Sciatic nerve (tissue), 2 donors: ENCODE measurements at regions of chr3 and their contacts with region 1.

Region 1: DNA sequence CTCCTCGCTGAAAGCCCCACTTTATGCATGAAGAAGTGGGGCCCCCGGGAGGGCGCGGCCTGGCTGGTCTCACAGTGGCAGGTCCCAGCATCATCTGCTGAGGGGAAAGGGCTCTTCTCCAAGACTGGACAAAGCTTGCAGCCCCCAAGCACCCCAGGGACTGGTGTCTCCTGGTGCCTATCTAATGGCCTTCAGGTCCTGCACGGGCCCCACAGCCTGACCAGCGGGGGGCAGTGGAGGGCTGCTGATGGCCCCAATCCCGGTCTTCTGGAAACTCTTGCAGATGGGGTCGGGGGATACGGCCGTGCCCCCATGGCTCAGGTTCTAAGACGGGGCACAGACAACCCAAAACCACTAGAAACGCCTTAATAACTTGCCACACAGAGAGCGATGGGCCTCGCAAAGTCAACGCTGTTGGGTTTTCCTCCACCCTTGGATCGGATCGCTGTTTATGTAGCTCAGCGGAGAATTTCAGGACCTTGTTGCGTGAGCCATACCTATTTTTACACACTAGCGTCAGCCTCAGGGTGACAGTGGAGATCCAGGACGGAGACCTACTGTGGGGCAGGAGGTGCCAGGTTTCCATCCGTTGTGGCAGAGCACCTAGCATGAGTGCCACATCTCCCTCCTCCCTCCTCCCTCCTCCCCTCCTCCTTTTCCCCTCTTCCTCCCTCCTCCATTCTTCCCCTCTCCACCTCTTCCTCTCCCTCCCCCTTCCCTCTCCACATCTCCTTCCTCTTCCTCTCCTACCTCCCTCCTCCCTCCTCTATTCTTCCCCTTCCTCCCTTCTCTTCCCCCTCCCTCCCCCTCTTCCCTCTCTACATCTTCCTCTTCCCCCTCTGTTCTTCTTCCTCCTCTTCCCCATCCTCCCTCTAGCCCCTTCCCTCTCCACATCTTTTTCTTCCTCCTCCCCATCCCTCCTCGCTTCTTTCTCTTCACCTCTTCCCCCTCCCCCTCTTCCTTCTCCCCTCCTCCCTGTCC is 79.3 kb upstream of the ALDH1L1 start:
- DNase-seq: peak; percentile 72
- ATAC-seq: peak; percentile 70

Region 2: DNA sequence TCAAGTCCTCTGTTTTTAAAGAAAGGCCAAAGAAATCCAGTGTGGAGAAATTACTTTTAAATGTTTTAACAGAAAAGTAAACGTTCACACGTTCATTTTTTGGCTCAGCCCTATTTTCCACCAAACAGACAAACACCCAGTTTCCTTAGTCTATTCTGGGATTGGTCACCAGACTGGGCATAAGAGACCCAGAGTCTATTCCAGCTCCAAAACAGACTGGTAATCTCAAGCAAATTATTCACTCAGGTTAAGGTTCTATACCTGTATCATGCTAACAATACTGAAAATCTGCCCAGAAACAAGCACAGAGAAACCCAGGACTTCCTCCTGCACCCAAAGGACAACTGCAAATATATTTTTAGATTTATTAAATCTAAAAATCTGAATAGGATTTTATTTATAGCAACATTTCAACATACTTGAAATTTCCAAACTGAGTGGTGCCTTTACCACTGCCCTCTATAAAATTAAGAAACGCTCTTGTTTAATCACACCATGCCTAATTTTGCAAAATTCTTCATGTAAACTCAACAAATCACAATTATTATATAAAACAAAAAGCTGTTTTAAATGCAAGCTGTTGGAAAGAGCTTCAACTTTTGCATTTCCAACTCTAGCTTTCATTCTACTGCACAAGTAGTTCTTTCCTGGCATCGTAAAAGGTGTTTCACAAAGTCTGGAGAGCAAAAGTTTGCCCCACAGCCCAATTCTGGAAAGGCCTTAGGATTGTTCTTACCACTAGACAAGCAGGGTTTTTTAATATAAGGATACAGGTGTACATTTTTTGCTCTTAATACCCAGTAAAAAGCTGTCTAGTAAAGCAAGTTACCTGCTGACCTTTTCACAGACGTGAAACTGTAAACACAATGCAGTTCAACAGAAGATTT is 903.3 kb before region 1 on chr3:
- intact Hi-C with region 1: no loop called
- DNase-seq: no peak
- ATAC-seq: no peak

Region 3: DNA sequence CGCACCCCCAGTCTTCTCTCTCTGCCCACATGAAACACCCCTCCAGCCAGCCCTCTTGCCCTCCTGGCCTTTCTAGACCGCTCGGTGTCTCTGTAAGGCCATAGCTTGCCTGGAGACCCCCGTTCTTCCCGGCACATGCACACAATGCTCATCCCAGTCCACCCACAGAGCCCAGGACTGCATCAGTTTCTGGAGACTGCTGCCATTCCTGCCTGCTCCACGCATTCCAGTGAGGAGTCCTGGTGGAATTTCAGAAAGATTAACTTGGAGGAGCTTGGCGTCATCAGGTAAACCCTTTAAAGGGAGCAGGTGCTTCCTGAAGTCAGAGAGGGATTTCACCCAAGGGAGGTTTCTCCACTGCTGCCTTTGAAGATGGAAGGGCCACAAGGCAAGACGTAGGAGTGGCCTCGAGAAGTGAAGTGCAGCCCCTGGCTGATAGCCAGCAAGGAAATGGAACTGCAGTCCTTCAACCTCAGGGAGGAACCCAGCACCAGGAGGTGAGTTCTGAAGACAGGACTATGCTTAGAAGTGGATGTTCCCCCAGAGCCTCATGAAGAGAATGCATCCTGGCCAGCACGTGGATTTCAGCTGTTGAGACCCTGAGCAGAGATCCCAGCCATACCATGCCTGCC is 195.0 kb before region 1 on chr3:
- intact Hi-C with region 1: no loop called
- DNase-seq: no peak
- ATAC-seq: no peak

Region 4: DNA sequence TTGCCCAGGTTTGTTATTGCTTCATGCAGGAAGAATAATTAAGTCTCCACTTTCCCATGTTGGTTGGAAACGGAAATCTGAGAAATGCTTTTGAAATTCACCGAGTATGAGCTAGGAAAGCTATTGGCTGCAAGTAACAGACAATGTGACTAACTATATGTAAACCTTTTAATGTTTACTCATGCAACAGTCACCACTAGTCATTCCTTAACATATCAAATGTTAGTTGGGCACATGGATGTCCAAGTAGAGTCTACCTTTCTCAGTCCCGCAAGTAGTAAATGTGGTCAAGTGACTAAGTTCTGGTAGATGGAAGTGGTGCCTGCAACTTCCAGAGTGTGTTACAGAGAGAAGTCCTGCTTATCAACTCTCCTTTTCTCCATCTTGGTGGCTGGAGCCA is 45.0 kb after region 1 on chr3:
- intact Hi-C with region 1: no loop called
- DNase-seq: no peak
- ATAC-seq: no peak

Region 5: GRCh38 chr3:126321490-126321889 is 61.8 kb after region 1 on chr3:
- intact Hi-C with region 1: loop called (anchors 2 kb)
- DNase-seq: no peak
- ATAC-seq: no peak

Region 6: DNA sequence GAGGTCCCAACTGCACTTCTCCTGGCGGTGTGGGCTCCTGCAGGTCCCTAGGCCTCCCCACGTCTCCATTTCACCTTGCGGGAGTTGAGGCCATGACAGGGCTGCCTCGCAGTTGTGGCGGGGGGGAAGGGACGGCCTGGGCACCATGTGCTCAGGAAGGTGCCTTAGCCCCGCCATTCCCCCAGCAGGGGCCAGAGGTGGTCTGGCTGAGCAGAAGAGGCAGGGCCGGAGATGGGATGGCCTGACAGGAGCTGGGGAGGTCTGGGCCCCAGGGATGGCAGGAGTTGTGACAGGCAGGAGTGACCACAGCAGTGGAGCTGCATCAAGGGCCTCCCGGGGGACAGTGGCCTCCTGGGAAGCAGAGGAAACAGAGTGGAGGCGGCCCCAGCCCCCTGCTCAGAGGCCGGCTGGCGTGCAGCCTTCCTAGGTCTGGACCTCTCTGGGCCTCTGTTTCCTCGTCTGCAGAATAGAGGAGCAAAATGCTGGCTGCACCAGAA is 116.2 kb after region 1 on chr3:
- intact Hi-C with region 1: loop called (anchors 5 kb)
- DNase-seq: peak; percentile 46
- ATAC-seq: no peak

Region 7: DNA sequence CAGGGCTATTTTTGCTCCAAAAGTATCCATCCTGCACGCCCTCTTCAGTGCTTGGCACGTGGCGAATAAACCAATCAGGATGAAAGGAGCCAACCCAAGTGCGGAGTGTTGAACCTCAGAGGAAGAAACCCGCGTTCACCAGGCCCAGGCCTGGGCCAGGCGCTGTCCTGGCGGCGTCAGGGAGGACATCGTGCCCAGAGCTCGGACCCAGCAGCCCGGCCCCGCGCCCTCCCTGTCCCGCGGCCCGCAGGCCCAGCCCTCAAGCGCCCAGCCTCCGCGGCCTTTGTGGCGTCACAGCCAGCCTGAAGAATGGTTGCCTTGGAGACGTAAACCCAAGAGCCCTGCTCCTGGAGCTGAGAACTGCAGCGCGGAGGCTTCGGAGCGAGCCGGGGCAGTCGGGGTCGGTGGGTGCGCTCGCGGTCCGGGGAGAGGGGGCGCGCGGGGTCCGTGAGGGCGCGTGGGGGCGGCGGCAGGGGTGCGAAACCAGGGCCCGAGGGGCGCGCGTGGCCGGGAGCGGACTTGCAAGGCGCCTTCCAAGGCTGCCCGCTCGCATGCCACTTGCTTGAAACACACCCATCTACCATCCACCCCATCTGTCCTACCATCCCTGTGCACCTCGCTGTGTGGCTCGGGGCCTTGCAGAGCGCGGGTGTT is 135.0 kb after region 1 on chr3 and contains the start of gene CFAP100:
- intact Hi-C with region 1: loop called (anchors 5 kb)
- DNase-seq: peak; percentile 73
- ATAC-seq: peak; percentile 90
- total RNA-seq, gene CFAP100: 1.5 TPM